ENCODE measurements at regions of chr6 and their contacts with region 1.

Region 1: DNA sequence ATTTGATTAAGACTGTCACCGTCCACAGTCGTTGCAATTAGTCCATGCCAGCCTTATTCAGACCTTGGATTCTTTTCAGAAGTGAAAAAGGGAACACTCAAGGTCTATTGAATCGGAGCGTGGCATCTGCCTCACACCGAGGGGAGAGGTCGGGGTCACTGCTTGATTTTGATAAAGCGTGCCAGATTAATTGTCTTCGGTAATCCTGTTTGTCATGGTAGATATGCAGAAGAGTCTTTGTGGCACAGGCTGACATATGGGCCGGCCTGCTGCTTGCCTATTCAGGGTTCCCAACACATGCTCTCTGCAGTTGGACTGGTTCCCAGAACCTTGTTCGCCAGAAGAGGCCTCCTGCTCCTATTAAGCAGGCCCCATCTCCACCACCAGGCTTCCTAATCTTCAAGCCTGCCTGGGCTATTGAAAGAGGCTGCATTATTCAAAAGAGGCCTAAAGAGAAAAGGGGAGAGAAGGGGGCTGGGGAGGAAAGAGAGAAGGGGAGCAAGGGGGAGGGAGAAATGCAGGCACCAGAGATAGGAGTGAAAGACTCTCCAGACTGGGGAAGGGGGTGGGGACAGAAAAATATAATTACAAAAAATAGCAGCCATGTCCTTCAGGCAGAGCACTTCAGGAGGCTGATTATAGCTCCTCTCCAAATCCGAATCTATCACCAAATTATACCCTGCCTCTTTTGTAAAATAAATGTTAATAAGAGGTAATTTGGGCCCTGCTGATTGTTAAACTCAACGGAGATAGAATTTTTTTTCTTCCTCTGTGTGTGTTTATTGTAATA is 611.3 kb downstream of the HDGFL1 start:
- DNase-seq: no peak
- H3K4me3 ChIP-seq: no peak overlapping the region
- H3K27ac ChIP-seq: no peak overlapping the region
- H3K4me1 ChIP-seq: no peaks in the 10 kb centered on the region
- H3K27me3 ChIP-seq: no peaks in the 10 kb centered on the region
- CTCF ChIP-seq: no peak
- POLR2A ChIP-seq: no peak

Region 2: DNA sequence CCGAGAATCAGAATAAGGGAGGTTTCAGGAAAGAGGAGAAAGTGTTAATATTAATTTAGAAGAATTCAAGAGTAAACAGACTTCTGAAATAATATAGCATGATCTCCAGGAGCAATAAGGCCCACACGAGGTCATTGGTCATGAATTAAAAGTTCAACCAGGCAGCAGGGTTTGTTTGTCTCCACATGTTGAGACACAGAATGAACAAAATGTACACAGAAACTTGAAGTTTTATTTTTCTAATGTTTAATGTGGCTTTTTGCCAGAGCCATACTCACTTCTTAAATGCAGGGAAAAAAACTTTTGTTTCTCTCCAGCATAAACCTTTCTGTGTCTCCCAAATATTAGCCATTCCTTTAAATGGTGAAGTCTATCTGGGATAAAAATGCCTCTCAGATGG is 106.9 kb before region 1 on chr6:
- intact Hi-C with region 1: no loop called
- DNase-seq: no peak
- H3K4me3 ChIP-seq: no peak overlapping the region
- H3K27ac ChIP-seq: no peak overlapping the region
- H3K4me1 ChIP-seq: no peaks in the 10 kb centered on the region
- H3K27me3 ChIP-seq: no peaks in the 10 kb centered on the region
- CTCF ChIP-seq: no peak
- POLR2A ChIP-seq: no peak

Region 3: GRCh38 chr6:23137611-23138010 is 43.1 kb before region 1 on chr6:
- intact Hi-C with region 1: no loop called
- DNase-seq: no peak
- H3K4me3 ChIP-seq: no peak overlapping the region
- H3K27ac ChIP-seq: no peak overlapping the region
- H3K4me1 ChIP-seq: no peaks in the 10 kb centered on the region
- H3K27me3 ChIP-seq: no peaks in the 10 kb centered on the region
- CTCF ChIP-seq: no peak
- POLR2A ChIP-seq: no peak

Region 4: GRCh38 chr6:25094726-25095125 is 1914.0 kb after region 1 on chr6:
- intact Hi-C with region 1: loop called (anchors 10 kb)
- DNase-seq: no peak
- H3K4me3 ChIP-seq: no peak overlapping the region
- H3K27ac ChIP-seq: no peak overlapping the region
- H3K4me1 ChIP-seq: no peaks in the 10 kb centered on the region
- H3K27me3 ChIP-seq: no peaks in the 10 kb centered on the region
- CTCF ChIP-seq: no peak
- POLR2A ChIP-seq: no peak